Psoas muscle (tissue), 8 donors: ENCODE measurements at regions of chr5 and their contacts with region 1.

Region 1: DNA sequence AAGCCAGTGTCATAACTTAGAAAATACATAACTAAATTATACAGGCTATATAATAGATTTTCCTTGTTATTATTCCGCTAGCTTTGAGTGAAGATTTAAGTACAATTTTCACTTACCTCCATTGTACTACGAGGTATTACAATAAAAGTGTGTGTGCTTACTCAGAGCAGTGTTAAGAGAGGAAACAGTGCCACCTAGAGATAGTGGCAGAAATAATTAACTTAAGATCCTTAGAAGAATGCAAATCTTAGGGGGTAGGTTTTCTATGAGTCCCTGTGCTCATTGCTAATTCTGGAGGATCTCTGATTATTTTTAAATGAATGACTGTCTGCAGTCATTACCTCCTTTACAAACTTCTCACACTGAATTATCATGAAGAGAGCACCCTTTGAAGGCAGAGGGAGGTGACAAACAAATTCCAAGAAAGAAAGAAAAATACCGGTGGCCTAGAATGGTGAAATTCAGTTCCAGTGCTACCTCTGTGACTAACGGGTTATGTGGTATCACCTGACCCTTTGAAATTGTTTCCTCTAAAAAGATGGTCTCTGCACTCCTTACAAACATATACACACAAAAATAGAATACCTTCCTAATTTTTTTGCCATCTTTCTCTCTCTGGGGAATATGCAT is 379.8 kb downstream of the TRIM36 start:
- DNase-seq: no peak
- ATAC-seq: peak in 1 of 4 donors; percentile 40
- H3K4me3 ChIP-seq: no peak overlapping the region
- H3K27ac ChIP-seq: no peak overlapping the region
- H3K4me1 ChIP-seq: no peaks in the 10 kb centered on the region
- H3K27me3 ChIP-seq: peaks cover 0 to 2% (median 0%) of the 10 kb centered on the region in 3 donors
- CTCF ChIP-seq: peak; percentile 44

Region 2: GRCh38 chr5:113678924-113679575 is 1110.8 kb before region 1 on chr5:
- intact Hi-C with region 1: loop called in 1 of 2 experiments (anchors 5 kb)
- DNase-seq: no peak
- ATAC-seq: peak; percentile 48 to 74 (median 55)
- H3K4me3 ChIP-seq: no peak overlapping the region
- H3K27ac ChIP-seq: no peak overlapping the region
- H3K4me1 ChIP-seq: no peaks in the 10 kb centered on the region
- H3K27me3 ChIP-seq: no peaks in the 10 kb centered on the region
- CTCF ChIP-seq: peak; percentile 68

Region 3: GRCh38 chr5:114524221-114524620 is 265.7 kb before region 1 on chr5:
- intact Hi-C with region 1: no loop called
- DNase-seq: no peak
- ATAC-seq: no peak
- H3K4me3 ChIP-seq: no peak overlapping the region
- H3K27ac ChIP-seq: no peak overlapping the region
- H3K4me1 ChIP-seq: no peaks in the 10 kb centered on the region
- H3K27me3 ChIP-seq: no peaks in the 10 kb centered on the region
- CTCF ChIP-seq: no peak

Region 4: DNA sequence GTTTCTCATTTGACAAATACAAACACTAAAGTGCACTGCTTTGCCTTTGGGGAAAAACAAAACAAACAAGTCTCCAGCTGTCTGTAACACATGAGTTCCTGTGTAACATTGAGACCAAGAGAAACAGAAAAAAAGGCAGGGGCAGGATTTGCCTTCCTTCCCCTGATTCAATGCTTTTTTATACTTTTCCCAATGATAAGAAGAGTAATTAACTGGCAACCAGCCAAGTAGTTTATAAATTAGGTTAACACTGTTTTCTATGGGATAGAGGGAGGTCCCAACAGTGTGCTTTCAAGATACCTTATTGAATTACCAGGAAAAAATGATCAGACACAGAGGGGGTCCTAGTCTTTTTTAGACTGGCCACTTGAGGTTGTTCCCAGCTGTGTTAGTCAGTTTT is 33.0 kb after region 1 on chr5:
- intact Hi-C with region 1: no loop called
- DNase-seq: no peak
- ATAC-seq: no peak
- H3K4me3 ChIP-seq: no peak overlapping the region
- H3K27ac ChIP-seq: no peak overlapping the region
- H3K4me1 ChIP-seq: no peaks in the 10 kb centered on the region
- H3K27me3 ChIP-seq: peaks cover 0 to 1% (median 0%) of the 10 kb centered on the region in 3 donors
- CTCF ChIP-seq: no peak

Region 5: GRCh38 chr5:114957384-114957783 is 167.5 kb after region 1 on chr5:
- intact Hi-C with region 1: no loop called
- DNase-seq: no peak
- ATAC-seq: no peak
- H3K4me3 ChIP-seq: no peak overlapping the region
- H3K27ac ChIP-seq: no peak overlapping the region
- H3K4me1 ChIP-seq: no peaks in the 10 kb centered on the region
- H3K27me3 ChIP-seq: no peaks in the 10 kb centered on the region
- CTCF ChIP-seq: no peak